ENCODE measurements at regions of chr15 and their contacts with region 1.

Region 1: DNA sequence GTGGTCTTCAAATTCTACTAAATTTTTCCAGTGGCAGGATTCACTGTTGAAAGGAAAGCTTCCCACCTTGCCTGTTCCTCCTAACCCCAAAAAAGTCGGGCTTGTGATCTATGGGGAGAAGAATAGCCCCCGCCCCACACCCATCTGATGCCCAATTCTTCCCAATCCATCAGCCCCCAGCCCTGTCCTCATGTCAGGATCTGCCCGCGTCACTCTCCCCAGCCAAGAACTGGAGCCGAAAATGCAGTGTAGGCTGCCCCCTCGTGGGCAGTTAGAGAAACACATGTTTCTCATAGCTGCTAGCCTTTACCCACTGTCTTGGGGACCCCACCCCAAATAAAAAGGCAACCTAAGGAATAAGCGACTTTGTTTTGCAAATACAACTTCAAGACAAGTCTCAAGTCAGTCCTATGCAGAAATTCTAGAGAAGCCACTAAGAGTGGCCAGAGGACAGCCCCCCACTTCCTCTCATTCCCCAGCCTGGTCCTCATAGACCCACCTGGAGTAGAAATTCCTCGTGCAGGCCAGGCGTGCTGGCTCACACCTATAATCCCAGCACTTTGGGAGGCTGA is 13.0 kb upstream of the CSK start:
- DNase-seq: peak; percentile 83
- ATAC-seq: peak; percentile 45
- H3K4me3 Mint-ChIP-seq: no peak overlapping the region
- H3K27ac Mint-ChIP-seq: no peak overlapping the region
- H3K4me1 Mint-ChIP-seq: peaks cover 20% of the 10 kb centered on the region
- H3K27me3 Mint-ChIP-seq: peaks cover 2% of the 10 kb centered on the region

Region 2: DNA sequence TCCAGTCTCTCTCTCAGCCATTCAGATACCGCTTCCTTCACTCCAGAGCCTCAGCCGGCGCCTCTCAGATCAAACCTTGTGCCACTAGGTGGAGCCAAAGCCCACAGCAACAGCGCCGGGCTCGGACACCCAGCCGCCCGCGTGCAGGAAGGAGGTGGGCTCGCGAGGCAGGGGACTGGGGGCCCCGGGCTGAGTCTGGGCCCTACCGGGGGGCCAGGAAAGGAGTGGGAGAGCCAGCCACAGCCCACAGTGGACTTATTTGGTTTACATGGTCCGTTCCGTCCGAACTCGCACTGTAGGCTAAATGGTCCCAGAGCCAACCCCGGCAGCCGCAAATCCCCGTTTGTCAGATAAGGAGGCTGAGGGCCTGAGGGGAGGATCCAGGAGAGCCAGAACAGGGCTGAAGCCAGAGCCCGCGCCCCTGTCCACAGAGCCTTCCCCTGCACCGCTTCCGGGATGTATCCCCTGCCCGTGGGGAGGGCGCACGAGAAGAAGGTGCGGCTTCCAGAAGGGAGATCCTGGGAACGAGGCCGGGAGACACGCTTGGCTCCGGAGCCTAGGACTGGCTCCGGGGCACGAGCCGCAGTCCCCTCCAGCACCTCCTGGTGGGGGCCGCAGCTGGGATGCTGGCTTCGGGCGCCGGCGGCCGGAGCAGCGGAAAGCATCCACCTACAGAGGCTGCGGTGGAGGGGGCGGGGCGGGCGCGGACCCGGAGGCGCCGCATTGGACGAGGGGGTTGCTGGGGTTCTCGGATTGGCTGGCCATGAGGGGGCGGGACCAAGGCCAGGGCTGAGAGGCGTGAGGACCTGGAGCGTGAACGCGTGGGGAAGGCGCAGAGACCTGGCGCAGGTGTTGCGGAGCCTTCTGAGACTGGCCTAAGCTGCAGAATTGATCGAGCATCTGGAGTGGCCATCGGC is 394.9 kb before region 1 on chr15:
- CTCF ChIA-PET with region 1: interaction called, 6 read pairs
- POLR2A ChIA-PET with region 1: no interaction called
- intact Hi-C with region 1: loop called (anchors 1 to 5 kb)
- DNase-seq: peak; percentile 97
- ATAC-seq: peak; percentile 84
- H3K4me3 Mint-ChIP-seq: peak overlapping the region; percentile 76
- H3K27ac Mint-ChIP-seq: no peak overlapping the region
- H3K4me1 Mint-ChIP-seq: peaks cover 31% of the 10 kb centered on the region
- H3K27me3 Mint-ChIP-seq: peaks cover 7% of the 10 kb centered on the region

Region 3: DNA sequence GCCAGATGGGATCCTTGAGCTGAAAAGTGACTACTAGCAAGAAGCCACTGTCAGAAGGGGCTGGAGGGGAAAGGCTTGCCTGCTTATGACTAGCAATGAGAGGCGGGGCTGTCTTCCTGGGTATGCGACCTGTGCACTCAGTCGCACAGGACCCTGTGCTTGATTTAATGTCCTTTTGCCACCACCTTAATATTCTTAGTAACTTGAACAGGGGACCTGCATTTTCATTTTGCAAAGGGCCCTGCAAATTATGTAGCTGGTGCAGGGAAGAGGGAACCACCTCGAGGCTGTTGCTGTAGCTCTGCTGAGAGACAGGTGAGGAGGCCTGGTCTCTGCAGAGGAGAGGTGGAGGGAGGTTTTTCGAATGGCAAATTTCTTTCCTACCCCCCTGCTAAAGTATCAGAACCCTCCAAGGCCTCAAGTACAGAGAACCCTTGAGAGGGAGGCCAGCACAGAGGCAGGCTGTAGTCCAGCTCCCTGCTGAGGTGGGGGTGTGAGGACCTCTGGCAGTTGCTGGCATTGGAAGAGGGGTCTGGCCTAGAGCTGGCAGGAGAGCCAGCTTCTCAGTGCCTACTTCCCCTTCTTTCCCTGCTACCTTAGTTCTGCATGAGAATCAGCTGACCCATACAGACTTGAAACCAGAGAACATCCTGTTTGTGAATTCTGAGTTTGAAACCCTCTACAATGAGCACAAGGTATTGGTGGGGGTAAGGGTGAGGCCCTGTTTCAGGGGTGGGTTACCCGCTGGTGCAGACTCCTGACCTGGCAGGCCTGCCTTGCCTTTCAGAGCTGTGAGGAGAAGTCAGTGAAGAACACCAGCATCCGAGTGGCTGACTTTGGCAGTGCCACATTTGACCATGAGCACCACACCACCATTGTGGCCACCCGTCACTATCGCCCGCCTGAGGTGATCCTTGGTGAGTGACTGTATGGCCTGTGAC is 141.8 kb before region 1 on chr15:
- CTCF ChIA-PET with region 1: interaction called, 458 read pairs
- POLR2A ChIA-PET with region 1: interaction called, 4 read pairs
- intact Hi-C with region 1: no loop called
- DNase-seq: no peak
- ATAC-seq: no peak
- H3K4me3 Mint-ChIP-seq: no peak overlapping the region
- H3K27ac Mint-ChIP-seq: peak overlapping the region; percentile 6
- H3K4me1 Mint-ChIP-seq: peaks cover 6% of the 10 kb centered on the region
- H3K27me3 Mint-ChIP-seq: no peaks in the 10 kb centered on the region

Region 4: GRCh38 chr15:74758736-74759135 is 10.1 kb before region 1 on chr15:
- CTCF ChIA-PET with region 1: interaction called, 12 read pairs
- POLR2A ChIA-PET with region 1: interaction called, 3 read pairs
- intact Hi-C with region 1: no loop called
- DNase-seq: no peak
- ATAC-seq: no peak
- H3K4me3 Mint-ChIP-seq: no peak overlapping the region
- H3K27ac Mint-ChIP-seq: no peak overlapping the region
- H3K4me1 Mint-ChIP-seq: no peaks in the 10 kb centered on the region
- H3K27me3 Mint-ChIP-seq: peaks cover 2% of the 10 kb centered on the region

Region 5: GRCh38 chr15:74793135-74794028 is 24.5 kb after region 1 on chr15:
- CTCF ChIA-PET with region 1: interaction called, 743 read pairs
- POLR2A ChIA-PET with region 1: interaction called, 3 read pairs
- intact Hi-C with region 1: loop called in 1 of 2 experiments (anchors 1 kb)
- DNase-seq: peak; percentile 86
- ATAC-seq: peak; percentile 24
- H3K4me3 Mint-ChIP-seq: no peak overlapping the region
- H3K27ac Mint-ChIP-seq: peak overlapping the region; percentile 88
- H3K4me1 Mint-ChIP-seq: peaks cover 86% of the 10 kb centered on the region
- H3K27me3 Mint-ChIP-seq: no peaks in the 10 kb centered on the region

Region 6: DNA sequence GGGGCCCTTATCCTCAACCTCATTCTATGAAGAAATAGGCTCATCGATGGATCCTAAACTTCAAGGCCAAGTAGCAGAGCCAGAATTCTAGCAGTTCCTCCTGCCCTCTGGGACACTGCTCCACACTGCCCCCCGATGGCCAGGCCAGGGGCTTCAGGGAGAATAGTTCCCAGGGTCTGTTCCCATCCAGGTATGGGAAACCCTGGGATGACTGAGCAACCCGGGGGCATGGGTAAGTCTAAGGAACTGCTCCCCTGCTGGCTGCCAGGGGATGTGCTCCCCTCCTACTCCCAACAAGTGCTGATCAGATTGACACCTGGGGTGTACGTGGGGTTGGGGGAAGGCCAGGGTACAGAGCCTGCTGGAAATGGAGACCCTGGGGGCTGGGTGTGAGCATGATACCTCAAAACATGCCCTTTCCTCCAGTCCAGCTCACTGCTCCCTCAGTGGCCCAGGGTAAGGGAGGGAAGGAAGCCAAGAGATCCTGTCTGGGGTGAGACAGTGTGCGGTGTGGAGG is 66.5 kb after region 1 on chr15:
- CTCF ChIA-PET with region 1: interaction called, 7 read pairs
- POLR2A ChIA-PET with region 1: no interaction called
- intact Hi-C with region 1: loop called in 1 of 2 experiments (anchors 1 kb)
- DNase-seq: peak; percentile 72
- ATAC-seq: peak; percentile 75
- H3K4me3 Mint-ChIP-seq: no peak overlapping the region
- H3K27ac Mint-ChIP-seq: no peak overlapping the region
- H3K4me1 Mint-ChIP-seq: peaks cover 1% of the 10 kb centered on the region
- H3K27me3 Mint-ChIP-seq: no peaks in the 10 kb centered on the region

Region 7: DNA sequence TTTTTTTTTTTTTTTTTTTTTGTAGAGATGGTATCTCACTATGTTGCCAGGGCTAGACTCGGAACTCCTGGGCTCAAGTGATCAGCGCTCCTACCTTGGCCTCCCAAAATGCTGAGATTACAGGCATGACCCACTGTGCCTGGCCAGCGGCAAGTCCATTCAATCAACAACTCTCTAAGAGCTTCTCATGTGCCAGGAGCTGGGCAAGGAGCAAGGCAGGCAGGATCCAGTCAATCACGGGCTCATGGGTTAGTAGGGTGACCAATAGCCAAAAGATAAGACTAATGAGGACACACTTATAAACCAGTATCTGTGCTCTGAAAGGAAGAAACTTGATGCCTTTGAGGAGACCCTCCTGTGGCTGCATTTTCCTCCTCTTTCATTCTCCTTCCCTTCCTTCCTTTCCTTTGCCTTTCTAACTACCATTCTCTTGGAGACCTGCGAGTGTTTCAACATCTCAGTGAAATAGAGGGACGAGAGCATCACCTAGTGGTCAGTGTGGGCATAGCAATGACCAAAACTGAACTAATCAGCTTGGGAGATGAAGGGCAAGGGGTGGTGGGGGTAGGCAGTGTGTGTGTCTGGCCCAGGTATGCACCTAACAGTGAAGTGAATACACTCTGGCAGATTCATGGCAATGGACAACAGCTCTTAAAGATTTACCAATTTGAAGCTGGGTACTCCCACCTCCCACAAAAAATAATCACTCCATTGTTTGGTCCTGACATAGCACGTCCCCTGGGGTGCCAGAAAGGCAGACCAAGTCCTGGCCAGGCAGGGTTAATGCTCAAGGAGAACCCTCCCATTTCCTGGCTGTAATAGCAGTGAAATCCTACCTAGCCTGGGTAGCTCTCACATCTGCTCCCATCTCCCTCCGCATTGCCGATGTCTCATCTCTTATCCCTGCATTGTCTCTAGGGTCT is 181.5 kb after region 1 on chr15:
- CTCF ChIA-PET with region 1: interaction called, 40 read pairs
- POLR2A ChIA-PET with region 1: no interaction called
- intact Hi-C with region 1: loop called (anchors 1 kb)
- DNase-seq: peak; percentile 87
- ATAC-seq: peak; percentile 87
- H3K4me3 Mint-ChIP-seq: no peak overlapping the region
- H3K27ac Mint-ChIP-seq: no peak overlapping the region
- H3K4me1 Mint-ChIP-seq: peaks cover 7% of the 10 kb centered on the region
- H3K27me3 Mint-ChIP-seq: no peaks in the 10 kb centered on the region